ENCODE measurements at regions of chr18 and their contacts with region 1.

Region 1: DNA sequence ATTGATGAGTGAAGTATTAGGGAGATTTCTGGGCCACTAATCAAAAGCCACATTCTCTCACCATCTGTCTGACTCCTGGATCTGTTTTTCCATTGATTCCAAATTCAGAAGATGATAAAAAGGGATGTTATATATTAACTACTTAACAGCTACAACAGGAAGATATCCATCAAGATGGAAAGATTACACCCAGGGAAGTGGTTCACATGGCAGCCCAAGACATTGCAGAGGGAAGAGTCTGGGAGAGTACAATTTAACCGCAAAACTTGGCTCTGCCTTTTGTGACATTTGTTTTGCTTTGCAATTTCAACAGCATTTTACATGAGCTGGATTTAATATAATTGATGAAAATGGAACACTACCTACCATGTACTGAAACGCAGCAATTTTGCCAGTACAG is 22.5 kb upstream of the TCF4 start:
- DNase-seq: no peak
- H3K4me3 ChIP-seq: no peak overlapping the region
- CTCF ChIP-seq: no peak

Region 2: GRCh38 chr18:55322178-55322735 is 288.2 kb before region 1 on chr18:
- in situ Hi-C with region 1: no loop called
- DNase-seq: peak; percentile 88
- H3K4me3 ChIP-seq: peak overlapping the region; percentile 58
- CTCF ChIP-seq: no peak

Region 3: GRCh38 chr18:55534547-55534946 is 76.0 kb before region 1 on chr18:
- in situ Hi-C with region 1: no loop called
- DNase-seq: no peak
- H3K4me3 ChIP-seq: no peak overlapping the region
- CTCF ChIP-seq: no peak

Region 4: DNA sequence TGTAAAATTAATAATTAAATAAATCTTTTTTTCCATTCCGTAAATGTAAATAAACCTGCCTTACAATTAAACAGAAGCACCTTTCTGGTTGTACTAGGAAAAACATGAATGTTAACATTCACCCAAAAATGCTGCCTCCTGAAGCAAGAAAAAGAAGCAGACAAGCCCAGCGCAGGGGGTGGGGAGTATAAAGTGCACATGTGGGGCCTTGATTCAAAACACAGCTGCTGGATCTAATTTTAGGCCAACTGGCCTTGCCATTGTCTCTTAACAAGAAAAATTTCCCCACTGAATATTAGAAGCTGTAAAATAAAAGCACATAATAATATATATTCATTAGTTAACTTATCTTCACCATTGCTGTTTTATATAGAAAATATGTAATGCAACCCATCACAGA is 50.8 kb before region 1 on chr18:
- in situ Hi-C with region 1: loop called (anchors 5 kb)
- DNase-seq: no peak
- H3K4me3 ChIP-seq: no peak overlapping the region
- CTCF ChIP-seq: no peak

Region 5: GRCh38 chr18:55570966-55571365 is 39.5 kb before region 1 on chr18:
- in situ Hi-C with region 1: no loop called
- DNase-seq: no peak
- H3K4me3 ChIP-seq: no peak overlapping the region
- CTCF ChIP-seq: no peak

Region 6: GRCh38 chr18:55641486-55641885 is 31.0 kb after region 1 on chr18:
- in situ Hi-C with region 1: no loop called
- DNase-seq: no peak
- H3K4me3 ChIP-seq: no peak overlapping the region
- CTCF ChIP-seq: no peak

Measured in astrocyte of the cerebellum (primary cell).